ENCODE measurements at regions of chr21 and their contacts with region 1.

Region 1: GRCh38 chr21:21156957-21157356 is 158.7 kb downstream of the NCAM2 start:
- DNase-seq: no peak
- ATAC-seq: no peak
- H3K4me3 ChIP-seq: no peak overlapping the region
- H3K4me3 Mint-ChIP-seq: no peak overlapping the region
- H3K27ac ChIP-seq: no peak overlapping the region
- H3K27ac Mint-ChIP-seq: no peak overlapping the region
- H3K4me1 ChIP-seq: no peaks in the 10 kb centered on the region
- H3K4me1 Mint-ChIP-seq: no peaks in the 10 kb centered on the region
- H3K27me3 ChIP-seq: no peaks in the 10 kb centered on the region
- H3K27me3 Mint-ChIP-seq: no peaks in the 10 kb centered on the region

Region 2: GRCh38 chr21:21458124-21458631 is 301.2 kb after region 1 on chr21:
- CTCF ChIA-PET with region 1: no interaction called
- POLR2A ChIA-PET with region 1: interaction called in 1 of 2 experiments, 12 read pairs
- DNase-seq: peak in 1 of 35 experiments; percentile 0
- ATAC-seq: no peak
- H3K4me3 ChIP-seq: no peak overlapping the region
- H3K4me3 Mint-ChIP-seq: no peak overlapping the region
- H3K27ac ChIP-seq: no peak overlapping the region
- H3K27ac Mint-ChIP-seq: no peak overlapping the region
- H3K4me1 ChIP-seq: no peaks in the 10 kb centered on the region
- H3K4me1 Mint-ChIP-seq: no peaks in the 10 kb centered on the region
- H3K27me3 ChIP-seq: no peaks in the 10 kb centered on the region
- H3K27me3 Mint-ChIP-seq: no peaks in the 10 kb centered on the region